ENCODE measurements at regions of chr7 and their contacts with region 1.

Region 1: GRCh38 chr7:86130268-86130667 is 513.4 kb upstream of the GRM3 start:
- DNase-seq: no peak
- H3K4me3 ChIP-seq: no peak overlapping the region
- H3K27ac ChIP-seq: no peak overlapping the region
- H3K4me1 ChIP-seq: no peaks in the 10 kb centered on the region
- H3K27me3 ChIP-seq: no peaks in the 10 kb centered on the region
- CTCF ChIP-seq: no peak

Region 2: DNA sequence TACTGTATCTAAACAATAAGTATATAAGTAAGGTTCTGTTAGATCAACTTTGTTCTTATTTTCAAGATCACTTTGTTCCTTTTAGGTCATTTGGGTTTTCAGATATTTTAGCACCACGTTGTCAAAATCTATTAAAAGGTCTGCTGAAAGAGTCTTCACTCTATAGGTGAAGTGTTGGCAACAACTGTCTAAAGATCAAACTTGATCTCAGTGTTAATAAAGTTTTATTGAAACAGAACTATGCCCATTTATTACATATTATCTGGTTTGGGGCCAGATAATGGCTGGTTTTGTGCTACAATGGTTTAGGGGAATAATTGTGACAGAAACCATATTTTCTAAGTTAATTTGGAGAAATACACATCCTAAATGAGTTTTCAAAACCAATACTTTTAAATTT is 34.6 kb after region 1 on chr7:
- CTCF ChIA-PET with region 1: no interaction called
- POLR2A ChIA-PET with region 1: interaction called, 13 read pairs
- intact Hi-C with region 1: no loop called
- DNase-seq: no peak
- H3K4me3 ChIP-seq: no peak overlapping the region
- H3K27ac ChIP-seq: no peak overlapping the region
- H3K4me1 ChIP-seq: no peaks in the 10 kb centered on the region
- H3K27me3 ChIP-seq: no peaks in the 10 kb centered on the region
- CTCF ChIP-seq: no peak

Region 3: DNA sequence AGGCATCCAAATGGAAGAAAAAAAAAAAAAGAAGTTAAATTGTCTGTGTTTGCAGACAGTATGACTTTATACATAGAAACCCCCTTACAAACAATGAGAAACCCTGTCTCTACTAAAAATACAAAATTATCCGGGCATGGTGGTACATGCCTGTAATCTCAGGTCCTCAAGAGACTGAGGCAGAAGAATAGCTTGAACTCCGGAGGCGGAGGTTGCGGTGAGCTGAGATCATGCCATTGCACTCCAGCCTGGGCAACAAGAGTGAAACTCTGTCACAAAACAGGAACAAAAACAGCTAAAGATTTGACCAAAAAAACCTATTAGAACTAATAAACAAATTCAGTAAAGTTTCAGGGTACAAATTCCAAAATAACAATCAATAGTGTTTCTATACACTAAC is 127.6 kb after region 1 on chr7:
- CTCF ChIA-PET with region 1: no interaction called
- POLR2A ChIA-PET with region 1: no interaction called
- intact Hi-C with region 1: no loop called
- DNase-seq: no peak
- H3K4me3 ChIP-seq: no peak overlapping the region
- H3K27ac ChIP-seq: no peak overlapping the region
- H3K4me1 ChIP-seq: no peaks in the 10 kb centered on the region
- H3K27me3 ChIP-seq: no peaks in the 10 kb centered on the region
- CTCF ChIP-seq: no peak